Heart left ventricle (tissue), 16 donors: ENCODE measurements at regions of chr2 and their contacts with region 1.

Region 1: DNA sequence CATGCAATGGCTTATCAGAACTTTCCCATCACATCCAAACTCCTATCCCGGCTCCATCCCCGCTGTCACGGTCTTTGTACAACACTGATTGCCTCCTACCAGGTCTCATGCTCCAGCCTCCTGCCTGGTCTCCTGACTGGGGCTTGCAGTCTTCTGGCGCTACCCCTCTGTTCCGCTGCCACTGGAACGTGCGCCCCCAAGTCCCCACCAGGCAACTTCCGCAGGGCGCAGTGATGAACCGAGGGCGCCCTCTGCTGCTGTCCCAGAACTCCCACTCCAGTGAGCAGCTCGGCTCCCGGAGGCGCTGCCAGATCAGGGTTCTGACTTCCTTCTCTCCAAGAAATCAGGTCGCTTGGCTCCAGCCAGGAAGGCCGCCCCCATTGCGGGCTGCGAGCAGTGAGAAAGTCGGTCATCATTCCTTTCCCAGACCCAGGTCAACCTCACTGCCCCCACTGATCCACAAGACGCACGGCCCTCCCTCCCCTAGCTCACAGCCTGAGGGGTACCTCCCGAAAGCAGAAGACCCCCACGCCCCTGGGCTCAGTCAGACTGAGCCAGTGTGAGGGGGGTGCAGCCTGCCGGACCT is 43.9 kb upstream of the RAB11FIP5 start:
- DNase-seq: peak; percentile 57 to 77 (median 70)
- ATAC-seq: peak; percentile 82 to 92 (median 89)
- H3K4me3 ChIP-seq: no peak overlapping the region
- H3K27ac ChIP-seq: no peak overlapping the region
- H3K4me1 ChIP-seq: peaks cover 0 to 8% (median 0%) of the 10 kb centered on the region in 12 donors
- H3K27me3 ChIP-seq: peaks cover 0 to 21% (median 9%) of the 10 kb centered on the region in 9 donors
- CTCF ChIP-seq: peak; percentile 58 to 87 (median 78)
- POLR2A ChIP-seq: no peak

Region 2: DNA sequence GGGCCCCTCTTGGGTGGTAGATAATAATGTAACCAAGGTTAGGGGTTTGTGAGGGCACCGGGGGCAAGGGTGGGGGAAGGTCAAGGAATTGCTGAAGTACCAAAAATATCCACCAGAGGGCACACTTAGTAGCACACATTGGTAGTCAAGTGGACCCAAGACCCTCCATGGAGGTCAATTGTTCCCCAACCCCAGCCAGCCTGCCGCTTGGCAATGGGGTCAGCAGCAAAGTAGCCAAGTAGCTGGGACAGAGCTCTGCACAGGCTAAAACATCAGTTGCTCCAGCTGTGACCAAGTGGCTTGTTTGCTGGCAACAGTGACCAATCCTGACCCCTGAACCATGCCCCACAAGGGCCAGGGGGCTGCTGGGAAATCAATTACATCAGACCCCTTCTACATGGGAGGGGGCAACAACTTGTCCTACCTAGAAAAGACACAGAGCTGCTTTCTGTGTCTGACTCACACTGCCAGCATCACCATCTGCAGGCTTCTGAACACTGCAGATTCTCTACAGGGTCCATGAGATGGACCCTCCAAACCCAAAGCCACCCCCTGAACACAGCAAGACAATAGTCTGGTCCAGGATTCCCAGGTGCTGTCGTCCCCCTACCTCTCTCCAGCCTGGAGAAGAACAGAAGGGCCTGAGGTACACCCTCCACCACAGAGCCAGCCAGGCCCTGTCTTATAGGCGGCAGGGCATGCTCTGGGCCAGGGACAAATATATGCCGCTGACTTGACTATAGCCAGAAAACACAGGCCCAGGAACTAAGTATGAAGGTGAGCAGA is 163.3 kb before region 1 on chr2:
- intact Hi-C with region 1: loop called in 8 of 10 experiments (anchors 2 to 5 kb)
- DNase-seq: peak in 1 of 5 donors; percentile 23
- ATAC-seq: peak in 2 of 4 donors; percentile 12 to 36
- H3K4me3 ChIP-seq: no peak overlapping the region
- H3K27ac ChIP-seq: no peak overlapping the region
- H3K4me1 ChIP-seq: peaks cover 0 to 11% (median 2%) of the 10 kb centered on the region in 12 donors
- H3K27me3 ChIP-seq: no peaks in the 10 kb centered on the region
- CTCF ChIP-seq: peak; percentile 64 to 87 (median 78)
- POLR2A ChIP-seq: no peak

Region 3: DNA sequence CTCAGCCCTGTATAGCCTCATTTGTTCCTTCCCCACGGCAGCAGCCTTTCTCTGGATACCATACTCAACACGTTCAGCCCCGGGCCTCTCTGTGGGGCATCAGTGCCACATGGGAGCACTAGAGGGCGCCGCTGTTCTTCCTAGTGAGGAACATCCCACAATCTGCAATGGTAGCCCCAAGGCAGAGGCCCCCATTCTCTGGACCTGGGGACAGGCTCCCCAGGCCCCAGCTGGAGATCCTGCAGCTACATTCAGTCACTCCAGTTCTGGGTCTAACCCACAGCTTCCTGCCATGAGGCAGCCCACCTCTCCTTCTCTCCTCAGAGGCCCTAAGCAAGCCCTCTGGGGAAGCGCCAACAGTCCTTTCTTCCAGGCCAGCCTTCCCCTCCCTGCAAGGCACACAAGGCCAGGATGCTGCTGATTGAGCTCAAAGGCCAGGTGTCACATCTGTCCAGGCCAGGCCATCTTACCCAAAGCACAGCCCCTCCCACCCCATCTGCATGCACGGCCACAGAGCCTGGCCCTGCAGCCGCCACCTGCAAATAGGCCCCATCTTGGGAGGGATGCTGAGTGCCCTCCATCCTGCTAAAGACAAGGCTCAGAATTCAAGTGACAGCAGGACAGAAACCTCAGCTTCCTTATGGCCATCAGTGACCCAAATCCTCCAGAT is 70.8 kb before region 1 on chr2:
- intact Hi-C with region 1: loop called (anchors 1 to 2 kb)
- DNase-seq: peak; percentile 73 to 89 (median 80)
- ATAC-seq: peak; percentile 28 to 80 (median 68)
- H3K4me3 ChIP-seq: no peak overlapping the region
- H3K27ac ChIP-seq: no peak overlapping the region
- H3K4me1 ChIP-seq: peaks cover 0 to 42% (median 18%) of the 10 kb centered on the region in 12 donors
- H3K27me3 ChIP-seq: no peaks in the 10 kb centered on the region
- CTCF ChIP-seq: peak; percentile 88 to 99 (median 94)
- POLR2A ChIP-seq: no peak

Region 4: DNA sequence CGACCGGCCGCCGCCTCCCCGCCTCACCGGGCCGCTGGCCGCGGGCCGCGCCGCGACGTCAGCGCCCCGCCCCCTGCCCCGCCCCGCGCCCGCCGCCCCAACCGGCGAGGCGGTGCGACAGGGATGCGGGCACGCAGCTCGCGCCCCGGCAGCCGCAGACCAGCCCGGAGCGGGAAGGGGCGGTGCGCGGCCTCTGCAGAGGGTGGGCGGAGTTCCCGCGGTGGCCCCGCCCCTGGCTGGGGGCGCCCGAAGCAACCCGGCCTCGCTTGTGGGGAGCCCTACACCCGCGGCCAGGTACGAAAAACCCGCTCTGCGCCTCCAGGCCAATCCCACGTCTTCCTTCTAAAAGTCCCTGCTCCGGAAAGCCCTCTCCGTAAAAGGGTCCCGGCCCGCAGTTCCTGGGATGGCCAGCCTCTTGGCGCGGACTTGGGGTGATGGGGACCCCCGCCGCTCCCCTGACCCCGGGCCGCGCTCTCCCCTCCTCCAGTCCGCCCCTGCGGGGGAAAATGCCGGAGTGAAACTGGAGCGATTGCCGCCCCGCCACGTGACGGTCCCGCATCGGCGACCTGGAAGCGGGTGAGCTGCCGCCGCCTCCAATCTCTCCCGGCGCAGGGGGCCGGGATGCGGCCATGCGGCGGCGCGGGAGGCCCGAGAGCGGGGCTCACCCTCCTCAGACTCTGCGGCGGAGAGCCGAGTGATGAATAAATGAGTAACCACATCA is 43.6 kb before region 1 on chr2 and contains the start of gene RAB11FIP5:
- intact Hi-C with region 1: loop called in 1 of 10 experiments (anchors 5 kb)
- DNase-seq: peak; percentile 69 to 89 (median 77)
- ATAC-seq: peak; percentile 68 to 88 (median 80)
- H3K4me3 ChIP-seq: peak within 1 kb of the TSS; percentile 75 to 96 (median 88)
- H3K27ac ChIP-seq: peak within 1 kb of the TSS; percentile 15 to 90 (median 82)
- H3K4me1 ChIP-seq: peaks cover 0 to 40% (median 23%) of the 10 kb centered on the region in 12 donors
- H3K27me3 ChIP-seq: peaks cover 0 to 7% (median 0%) of the 10 kb centered on the region in 9 donors
- CTCF ChIP-seq: peak in 1 of 12 donors; percentile 16
- POLR2A ChIP-seq: peak in 1 of 2 donors; percentile 14
- total RNA-seq, gene RAB11FIP5: 18.6 to 43.7 (median 24.8) TPM

Region 5: GRCh38 chr2:73212448-73213176 is 56.0 kb after region 1 on chr2:
- intact Hi-C with region 1: no loop called
- DNase-seq: peak; percentile 58 to 81 (median 68)
- ATAC-seq: peak; percentile 61 to 78 (median 70)
- H3K4me3 ChIP-seq: no peak overlapping the region
- H3K27ac ChIP-seq: peak overlapping the region in 1 of 12 donors; percentile 1
- H3K4me1 ChIP-seq: peaks cover 0 to 24% (median 10%) of the 10 kb centered on the region in 12 donors
- H3K27me3 ChIP-seq: no peaks in the 10 kb centered on the region
- CTCF ChIP-seq: peak; percentile 70 to 93 (median 85)
- POLR2A ChIP-seq: no peak